GM13976 (cell line): ENCODE measurements at regions of chr13 and their contacts with region 1.

Region 1: DNA sequence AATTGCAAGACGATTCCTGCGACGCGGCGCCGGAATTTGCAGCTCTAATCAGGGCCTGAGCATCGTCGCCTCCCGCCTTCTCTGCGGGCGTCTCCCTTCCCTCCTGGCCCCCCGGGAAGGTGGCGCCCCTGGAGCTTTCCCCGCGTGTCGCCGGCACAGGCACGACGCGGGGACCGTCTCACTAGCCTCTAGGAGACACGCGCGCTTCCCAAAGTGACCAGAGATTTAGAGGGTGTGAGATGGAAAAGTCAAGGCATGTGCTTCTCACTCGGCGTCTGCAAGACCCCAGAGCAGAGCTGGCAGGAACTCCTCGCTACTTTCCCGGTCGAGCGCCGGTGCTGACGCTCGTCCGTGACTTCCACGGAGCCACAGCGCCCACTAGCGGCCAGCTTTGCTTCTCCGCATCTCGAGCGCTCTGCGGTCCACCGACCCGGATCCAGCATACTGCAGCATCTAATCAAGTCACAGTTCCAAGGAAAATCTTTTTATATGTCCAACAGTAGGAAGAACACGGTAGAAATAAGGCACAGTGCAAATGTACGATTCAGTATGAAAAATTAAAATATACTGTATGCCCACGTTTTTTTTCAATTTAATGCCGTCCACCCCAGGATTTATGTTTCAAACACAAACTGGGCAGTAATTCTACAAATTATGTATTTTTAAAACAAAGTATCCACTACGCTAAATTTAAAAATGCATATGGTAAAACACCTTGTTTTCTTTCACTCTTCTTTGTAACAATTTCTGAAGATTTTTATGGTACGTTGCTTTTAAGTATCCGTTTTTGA is 977 bp upstream of the EFNB2 start:
- DNase-seq: peak; percentile 82
- CTCF ChIP-seq: peak; percentile 98

Region 2: DNA sequence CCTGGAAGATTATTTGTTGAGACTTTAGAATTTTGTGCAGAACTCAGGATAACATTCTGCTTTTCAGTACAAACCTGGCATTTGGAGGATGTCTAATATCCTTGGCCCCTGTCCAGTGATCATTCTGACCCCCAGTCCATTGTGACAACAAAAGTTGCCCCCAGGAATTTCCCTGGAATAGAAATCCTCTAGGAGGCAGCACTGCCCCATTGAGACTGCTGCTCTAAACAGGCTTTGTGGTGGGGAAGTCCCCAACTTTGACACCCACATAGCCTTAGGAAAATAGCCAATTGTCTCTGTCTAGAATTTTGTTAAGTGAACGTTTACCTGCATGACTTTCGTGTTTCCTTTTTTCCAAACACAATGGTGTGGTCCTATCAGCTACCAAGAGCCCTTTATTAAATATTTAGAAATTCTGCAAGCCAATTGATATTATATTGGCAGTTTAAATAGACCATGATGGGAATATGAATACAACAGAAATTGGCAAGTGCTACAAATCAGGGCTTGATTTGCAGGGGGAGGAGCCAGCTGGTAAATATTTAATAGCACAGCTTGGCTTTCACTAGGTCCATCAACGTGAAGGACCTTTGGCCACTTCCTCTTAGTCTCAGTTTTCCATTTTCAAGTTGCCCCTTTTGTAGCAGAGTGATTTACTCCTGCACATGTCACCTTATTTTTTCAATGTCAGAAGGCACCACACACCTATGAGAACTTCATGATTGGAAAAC is 452.7 kb before region 1 on chr13:
- in situ Hi-C with region 1: loop called (anchors 25 kb)
- DNase-seq: peak; percentile 40
- CTCF ChIP-seq: peak; percentile 26

Region 3: GRCh38 chr13:106393781-106394180 is 142.7 kb before region 1 on chr13:
- in situ Hi-C with region 1: no loop called
- DNase-seq: no peak
- CTCF ChIP-seq: no peak